ENCODE measurements at regions of chr17 and their contacts with region 1.

Region 1: DNA sequence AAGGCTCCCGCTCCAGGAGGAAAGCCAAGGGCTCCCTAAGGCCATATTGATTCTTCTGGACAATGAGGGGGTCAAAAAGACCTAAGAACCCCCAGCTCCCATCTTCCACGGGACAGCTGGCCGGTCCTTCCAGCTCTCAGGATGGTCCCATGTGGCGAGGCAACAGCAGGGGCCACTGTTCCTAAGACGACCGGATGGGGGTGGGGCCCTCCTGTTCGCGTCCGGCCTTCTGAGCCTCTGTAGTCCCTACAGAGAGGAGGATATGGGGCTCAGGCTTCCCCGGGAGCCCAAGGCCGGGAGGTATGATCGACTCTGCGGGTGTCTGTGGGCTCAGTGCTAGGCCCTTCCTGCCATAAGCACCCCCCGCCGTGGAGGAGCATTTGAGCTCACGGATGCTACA is 6.0 kb upstream of the DCXR start:
- DNase-seq: no peak
- ATAC-seq: peak; percentile 58
- H3K4me3 ChIP-seq: no peak overlapping the region
- H3K27ac ChIP-seq: no peak overlapping the region
- H3K4me1 ChIP-seq: peaks cover 51% of the 10 kb centered on the region
- H3K27me3 ChIP-seq: no peaks in the 10 kb centered on the region
- CTCF ChIP-seq: 0 out of 2 replicates have a peak, but pooled peaks have one; percentile 9
- EP300 ChIP-seq: no peak
- POLR2A ChIP-seq: no peak
- RAD21 ChIP-seq: no peak

Region 2: DNA sequence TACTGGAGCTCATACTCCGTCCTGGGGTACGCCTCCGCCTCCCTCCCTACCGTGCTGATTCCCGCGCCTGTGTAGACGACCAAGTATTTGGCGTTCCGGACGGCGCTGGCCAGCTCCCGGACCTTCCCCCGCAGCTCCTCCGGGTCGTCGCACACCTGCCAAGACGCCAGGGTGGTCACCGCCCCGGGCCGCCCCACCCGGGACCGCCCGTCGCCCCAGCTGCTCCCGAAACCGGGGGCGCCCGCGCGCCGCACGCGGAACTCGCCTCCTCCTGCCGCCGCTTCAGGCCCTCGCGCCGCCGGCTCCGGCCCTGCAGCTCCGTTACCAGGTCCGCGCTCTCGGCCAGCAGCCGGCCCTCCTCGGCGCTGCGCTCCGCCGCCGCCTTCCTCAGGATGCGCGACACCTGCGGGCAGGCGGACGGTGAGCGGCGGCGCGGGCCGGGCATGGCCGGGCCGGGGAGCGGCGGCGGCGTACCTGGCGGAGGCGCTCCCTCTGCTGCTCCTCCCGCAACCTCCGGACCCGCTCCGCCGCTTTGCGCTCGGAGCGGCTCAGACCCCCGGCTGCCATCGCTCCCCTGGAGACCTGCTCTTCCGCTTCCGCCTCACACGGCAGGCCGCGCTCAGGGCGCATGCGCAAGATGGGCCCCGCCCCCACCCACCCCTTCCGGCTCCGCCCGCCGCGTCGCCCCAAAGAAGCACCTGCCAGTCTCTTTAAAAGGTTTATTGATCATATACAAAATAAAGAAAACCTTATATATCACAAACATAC is 125.8 kb before region 1 on chr17 and contains the start of gene SIRT7:
- CTCF ChIA-PET with region 1: no interaction called
- POLR2A ChIA-PET with region 1: no interaction called
- in situ Hi-C with region 1: no loop called
- intact Hi-C with region 1: no loop called
- DNase-seq: peak; percentile 72
- ATAC-seq: peak; percentile 67
- H3K4me3 ChIP-seq: peak within 1 kb of the TSS; percentile 87 to 94 (median 93)
- H3K27ac ChIP-seq: peak within 1 kb of the TSS; percentile 46
- H3K4me1 ChIP-seq: peaks cover 27% of the 10 kb centered on the region
- H3K27me3 ChIP-seq: no peaks in the 10 kb centered on the region
- CTCF ChIP-seq: no peak; the same call in 1 of the 2 replicates
- EP300 ChIP-seq: no peak
- POLR2A ChIP-seq: peak; percentile 50 to 80; a peak in 3 of 4 replicates
- RAD21 ChIP-seq: peak; percentile 66
- total RNA-seq, gene SIRT7: 14.5 and 24.8 TPM in 2 replicates

Region 3: DNA sequence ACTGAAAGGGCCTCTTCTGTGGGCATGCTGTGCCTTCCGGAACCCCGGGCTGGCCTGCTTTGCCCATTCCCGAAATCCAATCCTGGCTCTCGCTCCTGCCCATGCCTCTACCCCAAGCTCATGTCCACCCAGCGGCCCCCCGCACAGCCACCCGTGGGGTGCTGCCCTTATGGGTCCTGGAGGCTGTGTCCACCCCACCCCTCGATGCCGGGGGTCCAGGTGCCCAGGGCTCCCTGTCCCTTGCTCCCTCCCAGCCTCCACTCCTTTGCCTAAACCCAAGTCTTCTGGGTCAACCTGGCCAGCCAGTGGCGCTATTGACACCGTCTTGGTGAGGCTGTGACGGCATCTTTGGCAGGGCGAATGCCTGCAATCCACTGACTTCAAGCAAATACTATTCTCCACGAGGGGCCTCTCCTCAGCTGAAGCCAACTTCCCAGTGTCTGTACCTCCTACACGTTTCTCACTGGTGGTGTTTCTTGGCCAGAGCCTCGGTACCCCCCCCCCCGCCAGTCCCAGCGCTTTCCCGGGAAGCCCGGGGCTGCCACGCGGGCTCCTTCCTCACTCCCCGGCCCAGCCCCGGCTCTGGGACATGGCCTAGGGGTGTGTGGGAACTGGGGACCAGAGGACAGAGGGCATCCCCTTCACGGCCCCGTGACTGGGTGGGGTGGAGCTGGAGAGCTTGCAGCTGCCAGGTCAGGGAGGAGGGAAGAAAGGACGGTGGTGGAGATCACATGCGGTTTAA is 34.3 kb after region 1 on chr17:
- CTCF ChIA-PET with region 1: no interaction called
- POLR2A ChIA-PET with region 1: no interaction called
- in situ Hi-C with region 1: no loop called
- intact Hi-C with region 1: loop called (anchors 2 kb)
- DNase-seq: no peak
- ATAC-seq: peak; percentile 1
- H3K4me3 ChIP-seq: no peak overlapping the region
- H3K27ac ChIP-seq: no peak overlapping the region
- H3K4me1 ChIP-seq: peaks cover 12% of the 10 kb centered on the region
- H3K27me3 ChIP-seq: no peaks in the 10 kb centered on the region
- CTCF ChIP-seq: peak; percentile 58
- EP300 ChIP-seq: no peak
- POLR2A ChIP-seq: no peak; a peak in 2 of 4 replicates
- RAD21 ChIP-seq: peak; percentile 24; the same call in 1 of the 2 replicates